Right cardiac atrium (tissue), 5 donors: ENCODE measurements at regions of chr15 and their contacts with region 1.

Region 1: DNA sequence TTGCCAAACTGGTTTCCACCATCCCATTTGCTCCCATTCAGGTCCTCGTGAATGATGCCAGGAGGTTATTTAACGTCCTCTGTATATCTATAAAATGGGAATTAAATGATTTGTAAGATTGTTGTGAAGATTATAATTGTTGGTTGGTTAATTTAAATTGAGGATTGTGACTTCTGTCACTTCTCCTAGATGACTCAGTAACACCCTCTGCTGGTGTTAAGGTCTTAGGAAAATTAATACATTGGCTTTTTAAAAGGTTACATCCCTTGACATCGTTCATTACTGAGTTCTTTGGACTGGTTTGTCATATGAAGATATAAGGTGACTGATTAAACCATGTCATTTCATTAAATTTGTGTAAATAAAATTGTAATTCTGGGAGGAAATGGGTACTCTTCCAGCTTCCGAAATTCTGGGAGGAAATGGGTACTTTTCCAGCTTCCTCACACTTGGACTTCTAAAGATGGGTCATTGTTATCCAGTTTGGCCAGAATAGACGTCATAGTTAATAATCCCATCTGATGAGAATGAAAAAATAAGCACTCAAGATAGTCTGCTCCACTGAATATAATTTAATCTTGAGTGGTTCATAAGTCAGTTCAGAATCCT is 33.3 kb upstream of the PAQR5 start:
- DNase-seq: no peak
- ATAC-seq: no peak
- H3K4me3 ChIP-seq: no peak overlapping the region
- H3K27ac ChIP-seq: no peak overlapping the region
- H3K4me1 ChIP-seq: no peaks in the 10 kb centered on the region
- H3K27me3 ChIP-seq: no peaks in the 10 kb centered on the region

Region 2: DNA sequence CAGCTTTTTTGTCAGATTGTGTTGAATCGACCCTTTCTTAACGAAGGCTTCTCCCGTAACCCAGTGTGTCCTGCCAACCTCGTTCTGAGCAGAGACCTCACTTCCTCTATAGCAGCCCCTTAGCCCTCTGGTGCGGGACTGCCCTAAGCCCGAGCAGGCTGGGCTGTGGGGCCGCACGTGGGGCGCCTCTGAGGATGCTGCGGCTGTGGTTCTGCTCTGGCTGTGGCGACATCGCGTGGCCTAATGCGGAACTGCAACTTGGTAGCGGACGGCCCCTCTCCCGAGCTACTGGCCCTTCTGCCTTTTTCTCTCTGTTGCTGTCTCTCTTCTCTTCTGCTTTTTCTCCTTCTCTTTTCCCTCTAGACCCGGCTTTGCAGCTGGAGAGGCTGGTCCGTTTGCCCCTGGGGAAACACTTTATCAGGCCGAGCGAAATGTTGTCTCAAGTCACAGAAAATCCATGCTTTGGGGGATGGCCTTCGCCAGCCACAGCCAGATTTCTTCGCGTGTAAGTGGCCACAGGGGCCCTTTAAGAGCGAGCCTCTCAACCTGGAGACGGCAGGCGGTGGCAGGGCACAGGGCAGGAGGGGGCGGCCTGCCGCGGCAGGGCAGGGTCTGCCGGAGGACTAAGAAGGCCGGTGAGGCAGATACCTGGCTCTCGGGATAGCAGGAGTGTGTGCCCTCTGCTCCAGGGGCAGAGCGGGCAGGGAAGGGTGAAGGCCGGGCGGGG is 129.3 kb after region 1 on chr15:
- intact Hi-C with region 1: loop called in 2 of 4 experiments (anchors 5 to 10 kb)
- DNase-seq: peak; percentile 84 to 94 (median 94)
- ATAC-seq: peak; percentile 86 to 92
- H3K4me3 ChIP-seq: no peak overlapping the region
- H3K27ac ChIP-seq: no peak overlapping the region
- H3K4me1 ChIP-seq: no peaks in the 10 kb centered on the region
- H3K27me3 ChIP-seq: no peaks in the 10 kb centered on the region

Region 3: DNA sequence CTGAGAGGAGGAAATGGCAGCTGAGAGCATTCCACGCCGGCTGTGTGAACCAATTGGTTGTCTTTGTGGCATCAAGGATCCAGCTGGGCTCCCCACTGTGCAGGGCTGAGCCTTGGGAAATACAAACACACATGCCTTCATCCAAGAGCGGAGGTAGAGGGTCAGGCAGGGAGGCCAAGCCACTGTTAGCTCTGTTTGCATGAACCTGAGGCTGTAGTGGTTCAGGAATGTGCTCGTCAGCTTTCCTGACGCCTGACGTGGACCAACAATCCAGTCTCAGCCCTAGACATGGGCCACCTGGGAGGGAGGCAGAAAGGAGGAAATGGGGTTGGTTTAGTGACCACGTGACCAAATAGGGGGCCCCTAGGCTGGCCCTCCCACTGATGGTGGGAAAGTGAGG is 555.4 kb after region 1 on chr15:
- intact Hi-C with region 1: no loop called
- DNase-seq: no peak
- ATAC-seq: no peak
- H3K4me3 ChIP-seq: no peak overlapping the region
- H3K27ac ChIP-seq: no peak overlapping the region
- H3K4me1 ChIP-seq: no peaks in the 10 kb centered on the region
- H3K27me3 ChIP-seq: no peaks in the 10 kb centered on the region